ENCODE measurements at regions of chr2 and their contacts with region 1.

Region 1: GRCh38 chr2:202178342-202178958 is 59.9 kb downstream of the SUMO1 start:
- DNase-seq: peak; percentile 71
- ATAC-seq: peak; percentile 67
- H3K4me3 Mint-ChIP-seq: no peak overlapping the region
- H3K27ac Mint-ChIP-seq: no peak overlapping the region
- H3K4me1 Mint-ChIP-seq: peaks cover 4% of the 10 kb centered on the region
- H3K27me3 Mint-ChIP-seq: peaks cover 3% of the 10 kb centered on the region
- CTCF ChIP-seq: peak; percentile 94

Region 2: GRCh38 chr2:201715483-201715882 is 463.0 kb before region 1 on chr2:
- CTCF ChIA-PET with region 1: no interaction called
- POLR2A ChIA-PET with region 1: no interaction called
- intact Hi-C with region 1: no loop called
- DNase-seq: no peak
- ATAC-seq: no peak
- H3K4me3 Mint-ChIP-seq: no peak overlapping the region
- H3K27ac Mint-ChIP-seq: no peak overlapping the region
- H3K4me1 Mint-ChIP-seq: no peaks in the 10 kb centered on the region
- H3K27me3 Mint-ChIP-seq: no peaks in the 10 kb centered on the region
- CTCF ChIP-seq: no peak

Region 3: GRCh38 chr2:202104278-202104870 is 74.1 kb before region 1 on chr2:
- CTCF ChIA-PET with region 1: interaction called, 12 read pairs
- POLR2A ChIA-PET with region 1: no interaction called
- intact Hi-C with region 1: loop called (anchors 5 kb)
- DNase-seq: peak; percentile 76
- ATAC-seq: peak; percentile 64
- H3K4me3 Mint-ChIP-seq: no peak overlapping the region
- H3K27ac Mint-ChIP-seq: no peak overlapping the region
- H3K4me1 Mint-ChIP-seq: no peaks in the 10 kb centered on the region
- H3K27me3 Mint-ChIP-seq: peaks cover 2% of the 10 kb centered on the region
- CTCF ChIP-seq: peak; percentile 72

Region 4: GRCh38 chr2:202165945-202166344 is 12.5 kb before region 1 on chr2:
- CTCF ChIA-PET with region 1: interaction called, 11 read pairs
- POLR2A ChIA-PET with region 1: interaction called, 3 read pairs
- intact Hi-C with region 1: no loop called
- DNase-seq: no peak
- ATAC-seq: no peak
- H3K4me3 Mint-ChIP-seq: no peak overlapping the region
- H3K27ac Mint-ChIP-seq: no peak overlapping the region
- H3K4me1 Mint-ChIP-seq: peaks cover 15% of the 10 kb centered on the region
- H3K27me3 Mint-ChIP-seq: peaks cover 12% of the 10 kb centered on the region
- CTCF ChIP-seq: no peak

Region 5: GRCh38 chr2:202193305-202193704 is 14.9 kb after region 1 on chr2:
- CTCF ChIA-PET with region 1: interaction called, 18 read pairs
- POLR2A ChIA-PET with region 1: interaction called, 3 read pairs
- intact Hi-C with region 1: no loop called
- DNase-seq: no peak
- ATAC-seq: no peak
- H3K4me3 Mint-ChIP-seq: no peak overlapping the region
- H3K27ac Mint-ChIP-seq: no peak overlapping the region
- H3K4me1 Mint-ChIP-seq: peaks cover 2% of the 10 kb centered on the region
- H3K27me3 Mint-ChIP-seq: peaks cover 4% of the 10 kb centered on the region
- CTCF ChIP-seq: no peak

Region 6: DNA sequence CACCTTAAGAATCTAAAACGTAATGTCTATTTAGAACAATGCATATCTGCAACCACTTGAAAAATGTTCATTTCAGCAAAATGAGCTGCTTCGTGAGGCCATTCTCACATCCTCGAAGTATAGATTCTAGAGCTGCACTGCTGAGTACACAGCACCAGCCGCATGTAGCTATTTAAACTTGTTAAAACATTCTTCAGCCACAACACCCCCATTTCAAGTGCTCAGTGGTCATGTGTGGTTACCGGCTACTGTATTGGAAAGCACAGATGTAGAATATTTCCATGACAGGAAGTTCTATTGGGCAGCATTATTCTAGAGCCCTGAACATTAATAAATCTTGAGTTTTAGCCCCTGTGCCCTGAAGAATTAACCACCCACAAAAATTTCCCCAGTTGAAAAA is 24.9 kb after region 1 on chr2:
- CTCF ChIA-PET with region 1: no interaction called
- POLR2A ChIA-PET with region 1: no interaction called
- intact Hi-C with region 1: no loop called
- DNase-seq: no peak
- ATAC-seq: no peak
- H3K4me3 Mint-ChIP-seq: no peak overlapping the region
- H3K27ac Mint-ChIP-seq: no peak overlapping the region
- H3K4me1 Mint-ChIP-seq: no peaks in the 10 kb centered on the region
- H3K27me3 Mint-ChIP-seq: no peaks in the 10 kb centered on the region
- CTCF ChIP-seq: no peak

Measured in activated CD8-positive, alpha-beta T cell treated with anti-CD3 and anti-CD28 coated beads for 36 hours (primary cell).